Caco-2 (cell line): ENCODE measurements at regions of chr11 and their contacts with region 1.

Region 1: GRCh38 chr11:34174412-34175041 is 69.1 kb downstream of the NAT10 start:
- DNase-seq: peak; percentile 71 to 88
- H3K4me3 ChIP-seq: peak overlapping the region; percentile 15; the same call in 1 of the 2 replicates
- H3K4me3 Mint-ChIP-seq: peak overlapping the region; percentile 75
- H3K27ac Mint-ChIP-seq: no peak overlapping the region
- H3K4me1 ChIP-seq: 0 out of 2 replicates have a peak, but pooled peaks cover 3% of the 10 kb centered on the region
- H3K4me1 Mint-ChIP-seq: no peaks in the 10 kb centered on the region
- H3K27me3 ChIP-seq: no peaks in the 10 kb centered on the region
- H3K27me3 Mint-ChIP-seq: no peaks in the 10 kb centered on the region
- CTCF ChIP-seq: peak; percentile 91 to 98

Region 2: GRCh38 chr11:34149786-34150185 is 24.7 kb before region 1 on chr11:
- CTCF ChIA-PET with region 1: interaction called, 15 read pairs
- POLR2A ChIA-PET with region 1: no interaction called
- intact Hi-C with region 1: no loop called
- DNase-seq: peak in 1 of 2 experiments; percentile 43
- H3K4me3 ChIP-seq: no peak overlapping the region
- H3K4me3 Mint-ChIP-seq: no peak overlapping the region
- H3K27ac Mint-ChIP-seq: no peak overlapping the region
- H3K4me1 ChIP-seq: no peaks in the 10 kb centered on the region
- H3K4me1 Mint-ChIP-seq: no peaks in the 10 kb centered on the region
- H3K27me3 ChIP-seq: no peaks in the 10 kb centered on the region
- H3K27me3 Mint-ChIP-seq: no peaks in the 10 kb centered on the region
- CTCF ChIP-seq: peak; percentile 51 to 58

Region 3: DNA sequence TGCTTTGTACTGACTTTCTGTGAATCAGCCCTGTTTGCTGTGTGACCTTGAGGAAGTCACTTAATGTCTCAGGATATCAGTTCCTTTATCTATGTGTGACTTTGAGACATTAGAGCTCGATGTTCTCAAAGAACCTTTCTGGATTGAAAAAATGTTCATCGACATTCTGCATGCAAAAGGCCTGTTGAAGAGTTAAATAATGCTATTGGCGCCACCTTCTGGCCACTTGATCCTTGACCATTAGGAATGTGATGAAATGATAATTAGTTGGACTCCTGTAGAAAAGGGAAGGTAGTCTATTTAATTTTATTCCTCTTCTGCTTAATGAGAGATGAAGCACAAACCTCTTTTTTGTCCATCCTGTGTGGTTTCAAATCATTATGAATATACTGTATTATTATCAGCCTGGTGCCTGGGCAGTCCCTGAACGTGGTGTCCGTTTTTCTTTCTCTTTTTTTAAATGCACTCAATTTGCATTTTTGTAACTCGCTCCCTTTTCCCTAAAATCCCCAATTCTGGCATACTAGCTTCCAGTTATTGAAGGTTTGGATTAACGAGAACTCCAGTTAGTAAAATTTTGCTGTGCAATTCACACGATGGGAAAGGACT is 318.4 kb after region 1 on chr11:
- CTCF ChIA-PET with region 1: interaction called, 5 read pairs
- POLR2A ChIA-PET with region 1: no interaction called
- intact Hi-C with region 1: loop called (anchors 1 kb)
- DNase-seq: peak; percentile 60 to 63
- H3K4me3 ChIP-seq: no peak overlapping the region
- H3K4me3 Mint-ChIP-seq: no peak overlapping the region
- H3K27ac Mint-ChIP-seq: no peak overlapping the region
- H3K4me1 ChIP-seq: no peaks in the 10 kb centered on the region
- H3K4me1 Mint-ChIP-seq: no peaks in the 10 kb centered on the region
- H3K27me3 ChIP-seq: no peaks in the 10 kb centered on the region
- H3K27me3 Mint-ChIP-seq: peaks cover 4% of the 10 kb centered on the region
- CTCF ChIP-seq: peak; percentile 64 to 69